Activated CD8-positive, alpha-beta memory T cell treated with anti-CD3 and anti-CD28 coated beads, Interleukin-2, amount 10 ng/mL, durations not matched to agents 7 days and 5 days (primary cell): ENCODE measurements at regions of chr21 and their contacts with region 1.

Region 1: DNA sequence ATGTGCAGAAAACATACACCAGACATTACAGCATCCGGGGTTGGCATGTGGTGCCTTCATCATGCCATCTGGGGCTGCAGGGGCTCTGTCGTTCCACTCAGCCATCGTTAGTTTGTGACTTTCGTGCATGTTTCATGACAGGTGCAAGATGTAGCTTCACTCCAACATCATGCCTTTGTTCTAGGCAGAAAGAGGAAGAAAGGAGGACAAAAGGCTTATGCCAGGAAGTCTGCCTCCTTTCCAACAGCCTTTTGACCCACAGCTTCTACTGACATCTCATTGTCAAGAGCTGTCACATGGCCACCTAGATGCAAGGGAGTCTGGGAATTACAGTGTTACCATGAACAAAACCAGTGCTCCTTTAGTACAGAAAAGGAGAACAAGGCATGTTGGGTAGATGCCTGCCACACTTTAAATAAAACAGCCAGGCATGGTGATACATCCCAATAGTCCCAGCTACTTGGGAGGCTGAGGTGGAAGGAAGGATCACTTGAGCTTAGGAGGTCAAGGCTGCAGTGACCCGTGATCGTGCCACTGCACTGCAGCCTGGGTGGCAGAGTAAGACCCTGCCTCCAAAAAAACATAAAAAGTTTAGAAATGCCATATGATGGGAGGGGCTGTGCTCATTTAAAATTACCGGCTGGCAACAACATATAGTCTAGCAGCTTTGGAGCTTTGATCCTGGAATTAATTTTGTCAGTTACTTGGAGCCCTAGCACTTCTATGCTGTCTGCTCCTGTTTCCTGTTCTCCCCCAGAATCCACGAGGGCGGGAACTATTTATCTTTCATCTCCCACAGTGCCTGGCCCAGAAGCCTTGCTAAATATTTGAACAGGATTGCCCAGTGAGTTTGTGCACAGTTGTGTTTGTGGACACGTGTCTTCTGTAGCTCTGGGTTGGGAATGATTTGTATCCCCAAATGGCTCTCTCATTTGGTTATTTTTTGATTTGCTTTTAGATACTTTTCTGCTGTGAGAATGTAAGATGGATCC is 7.4 kb downstream of the DOP1B start:
- DNase-seq: no peak
- ATAC-seq: no peak
- H3K4me3 Mint-ChIP-seq: no peak overlapping the region
- H3K27ac Mint-ChIP-seq: no peak overlapping the region
- H3K4me1 Mint-ChIP-seq: peaks cover 5% of the 10 kb centered on the region
- H3K27me3 Mint-ChIP-seq: no peaks in the 10 kb centered on the region

Region 2: DNA sequence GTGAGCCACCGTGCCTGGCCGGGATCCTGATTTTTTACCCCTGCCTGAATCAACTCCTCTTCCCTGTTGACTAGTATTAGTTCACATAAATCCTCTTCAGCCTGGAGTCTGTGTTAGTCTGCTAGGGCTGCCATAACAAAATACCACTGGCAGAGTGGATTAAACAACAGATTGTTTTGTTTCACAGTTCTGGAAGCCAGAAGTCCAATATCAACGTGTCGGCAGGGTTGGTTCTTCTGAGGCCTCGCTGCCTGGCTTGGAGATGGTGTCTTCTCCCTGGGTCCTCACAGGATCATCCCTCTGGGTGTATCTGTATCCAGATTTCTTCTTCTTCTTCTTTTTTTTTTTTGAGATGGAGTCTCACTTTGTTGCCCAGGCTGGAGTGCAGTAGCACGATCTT is 10.7 kb after region 1 on chr21:
- CTCF ChIA-PET with region 1: interaction called, 16 read pairs
- DNase-seq: no peak
- ATAC-seq: no peak
- H3K4me3 Mint-ChIP-seq: no peak overlapping the region
- H3K27ac Mint-ChIP-seq: peak overlapping the region; percentile 15
- H3K4me1 Mint-ChIP-seq: peaks cover 27% of the 10 kb centered on the region
- H3K27me3 Mint-ChIP-seq: no peaks in the 10 kb centered on the region